ENCODE measurements at regions of chr13 and their contacts with region 1.

Region 1: GRCh38 chr13:30673669-30674521 is 56.2 kb downstream of the USPL1 start:
- DNase-seq: peak; percentile 80
- H3K4me3 Mint-ChIP-seq: peak overlapping the region; percentile 85
- H3K27ac Mint-ChIP-seq: peak overlapping the region; percentile 84
- H3K4me1 Mint-ChIP-seq: peaks cover 28% of the 10 kb centered on the region
- H3K27me3 Mint-ChIP-seq: peaks cover 22% of the 10 kb centered on the region

Region 2: GRCh38 chr13:30158774-30159445 is 515.0 kb before region 1 on chr13:
- intact Hi-C with region 1: loop called (anchors 10 kb)
- DNase-seq: no peak
- H3K4me3 Mint-ChIP-seq: peak overlapping the region; percentile 23
- H3K27ac Mint-ChIP-seq: peak overlapping the region; percentile 78
- H3K4me1 Mint-ChIP-seq: peaks cover 43% of the 10 kb centered on the region
- H3K27me3 Mint-ChIP-seq: peaks cover under 1% of the 10 kb centered on the region

Region 3: DNA sequence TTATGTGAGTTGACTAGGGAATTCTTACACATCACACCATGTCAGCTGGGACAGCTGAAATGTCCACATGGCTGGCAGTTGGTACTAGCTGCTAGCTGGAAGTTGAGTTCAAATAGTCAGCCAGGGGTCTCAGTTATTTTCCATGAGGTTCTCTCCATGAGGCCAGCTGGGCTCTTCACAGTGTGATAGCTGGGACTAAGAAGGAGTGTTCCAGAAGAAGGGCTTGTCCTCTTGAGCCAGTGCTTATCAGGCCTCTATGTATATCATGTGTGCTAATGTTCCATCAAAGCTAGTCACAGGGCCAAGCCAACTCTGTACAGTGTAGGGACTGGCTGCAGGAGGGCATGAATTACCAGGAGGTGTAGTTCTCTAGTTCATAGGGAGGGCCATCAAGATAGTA is 44.4 kb before region 1 on chr13:
- intact Hi-C with region 1: loop called (anchors 2 kb)
- DNase-seq: no peak
- H3K4me3 Mint-ChIP-seq: no peak overlapping the region
- H3K27ac Mint-ChIP-seq: no peak overlapping the region
- H3K4me1 Mint-ChIP-seq: peaks cover 47% of the 10 kb centered on the region
- H3K27me3 Mint-ChIP-seq: no peaks in the 10 kb centered on the region

Region 4: GRCh38 chr13:30654430-30654829 is 19.5 kb before region 1 on chr13:
- intact Hi-C with region 1: loop called (anchors 1 kb)
- DNase-seq: peak; percentile 48
- H3K4me3 Mint-ChIP-seq: peak overlapping the region; percentile 68
- H3K27ac Mint-ChIP-seq: peak overlapping the region; percentile 89
- H3K4me1 Mint-ChIP-seq: peaks cover 43% of the 10 kb centered on the region
- H3K27me3 Mint-ChIP-seq: no peaks in the 10 kb centered on the region

Region 5: GRCh38 chr13:30865123-30866049 is 191.5 kb after region 1 on chr13:
- intact Hi-C with region 1: loop called (anchors 2 kb)
- DNase-seq: peak; percentile 9
- H3K4me3 Mint-ChIP-seq: no peak overlapping the region
- H3K27ac Mint-ChIP-seq: no peak overlapping the region
- H3K4me1 Mint-ChIP-seq: no peaks in the 10 kb centered on the region
- H3K27me3 Mint-ChIP-seq: peaks cover 11% of the 10 kb centered on the region

Measured in activated T-helper 1 cell treated with anti-CD3 and anti-CD28 coated beads, Interleukin-12 subunit alpha, Interleukin-12 subunit beta, Interleukin-2, Interleukin-4 antibody, amounts not matched to agents 30 ng/mL and 10 ng/mL and 1 ng/mL, durations not matched to agents 14 hours and 24 hours and 36 hours (primary cell).